ENCODE measurements at regions of chr10 and their contacts with region 1.

Region 1: DNA sequence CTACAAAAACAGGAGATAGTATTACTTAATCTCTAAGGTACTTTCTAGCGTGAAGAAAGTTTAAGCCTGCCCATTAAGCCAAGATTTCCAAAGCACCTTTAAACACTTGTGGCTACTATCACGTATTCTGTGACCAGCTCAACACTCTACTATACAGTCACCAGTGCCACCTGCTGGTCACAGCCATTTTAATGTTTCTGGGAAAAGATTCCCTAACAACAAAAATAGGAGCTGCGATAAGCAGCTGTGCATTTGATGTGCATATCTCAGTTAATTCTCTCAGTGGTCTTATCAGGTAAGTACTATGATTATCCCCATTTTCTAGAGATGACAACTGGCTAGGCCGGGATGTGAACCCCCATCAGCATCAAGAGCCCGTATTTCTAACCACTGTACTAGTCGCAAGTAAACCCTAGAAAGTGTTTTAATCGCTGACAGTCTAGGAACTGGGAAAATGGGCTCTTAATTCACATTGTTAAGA is 860 bp downstream of the SEC31B start:
- DNase-seq: peak; percentile 75
- H3K4me3 Mint-ChIP-seq: no peak overlapping the region
- H3K27ac Mint-ChIP-seq: peak overlapping the region; percentile 58
- H3K4me1 Mint-ChIP-seq: peaks cover 53% of the 10 kb centered on the region
- H3K27me3 Mint-ChIP-seq: no peaks in the 10 kb centered on the region

Region 2: DNA sequence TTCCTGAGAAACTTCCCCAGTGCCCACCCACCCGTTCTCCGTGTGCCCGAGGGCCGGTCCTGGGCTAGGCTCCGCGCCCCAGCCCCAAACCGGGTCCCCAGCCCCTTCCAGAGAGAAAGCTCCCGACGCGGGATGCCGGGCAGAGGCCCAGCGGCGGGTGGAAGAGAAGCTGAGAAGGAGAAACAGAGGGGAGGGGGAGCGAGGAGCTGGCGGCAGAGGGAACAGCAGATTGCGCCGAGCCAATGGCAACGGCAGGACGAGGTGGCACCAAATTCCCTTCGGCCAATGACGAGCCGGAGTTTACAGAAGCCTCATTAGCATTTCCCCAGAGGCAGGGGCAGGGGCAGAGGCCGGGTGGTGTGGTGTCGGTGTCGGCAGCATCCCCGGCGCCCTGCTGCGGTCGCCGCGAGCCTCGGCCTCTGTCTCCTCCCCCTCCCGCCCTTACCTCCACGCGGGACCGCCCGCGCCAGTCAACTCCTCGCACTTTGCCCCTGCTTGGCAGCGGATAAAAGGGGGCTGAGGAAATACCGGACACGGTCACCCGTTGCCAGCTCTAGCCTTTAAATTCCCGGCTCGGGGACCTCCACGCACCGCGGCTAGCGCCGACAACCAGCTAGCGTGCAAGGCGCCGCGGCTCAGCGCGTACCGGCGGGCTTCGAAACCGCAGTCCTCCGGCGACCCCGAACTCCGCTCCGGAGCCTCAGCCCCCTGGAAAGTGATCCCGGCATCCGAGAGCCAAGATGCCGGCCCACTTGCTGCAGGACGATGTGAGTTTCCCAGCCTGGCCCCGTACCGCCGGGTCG is 171.8 kb before region 1 on chr10 and contains the start of gene SCD:
- CTCF ChIA-PET with region 1: interaction called, 12 read pairs
- POLR2A ChIA-PET with region 1: no interaction called
- DNase-seq: peak; percentile 93
- H3K4me3 Mint-ChIP-seq: peak within 1 kb of the TSS; percentile 97
- H3K27ac Mint-ChIP-seq: peak within 1 kb of the TSS; percentile 83
- H3K4me1 Mint-ChIP-seq: peaks cover 71% of the 10 kb centered on the region
- H3K27me3 Mint-ChIP-seq: no peaks in the 10 kb centered on the region
- total RNA-seq, gene SCD: 117 to 129 TPM

Region 3: DNA sequence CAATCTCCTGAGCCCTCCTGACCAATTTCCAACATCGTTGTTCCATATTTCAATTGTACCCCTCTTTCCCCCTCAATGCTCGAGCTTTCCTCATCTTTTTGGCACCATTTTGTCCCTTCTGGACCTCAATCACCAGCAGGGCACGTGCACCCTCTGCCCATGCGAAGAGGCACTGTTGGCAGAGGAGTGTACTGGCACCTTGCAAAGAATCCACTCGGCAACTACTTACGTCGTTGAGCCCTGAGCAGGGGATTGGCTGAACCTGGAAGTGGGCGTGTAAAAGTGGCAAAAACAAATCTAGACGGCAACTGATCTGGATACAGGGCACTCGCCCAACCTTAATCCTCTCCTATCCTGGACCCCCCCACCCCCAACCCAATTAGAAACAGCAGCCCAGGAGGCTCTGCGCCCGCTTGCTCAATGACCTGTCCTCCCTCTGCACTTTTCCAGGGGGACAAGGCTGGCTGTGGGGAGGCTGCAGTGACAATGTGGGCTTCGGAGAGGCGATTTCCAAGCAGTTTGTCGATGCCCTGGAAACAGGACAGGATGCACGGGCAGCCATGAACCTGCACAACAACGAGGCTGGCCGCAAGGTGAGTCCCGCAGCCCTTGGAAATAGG is 37.2 kb before region 1 on chr10:
- CTCF ChIA-PET with region 1: interaction called, 82 read pairs
- POLR2A ChIA-PET with region 1: interaction called, 5 read pairs
- DNase-seq: peak; percentile 92
- H3K4me3 Mint-ChIP-seq: peak overlapping the region; percentile 74
- H3K27ac Mint-ChIP-seq: peak overlapping the region; percentile 70
- H3K4me1 Mint-ChIP-seq: peaks cover 33% of the 10 kb centered on the region
- H3K27me3 Mint-ChIP-seq: peaks cover 13% of the 10 kb centered on the region

Region 4: GRCh38 chr10:100529475-100530298 is 10.9 kb after region 1 on chr10 and contains the start of gene NDUFB8:
- CTCF ChIA-PET with region 1: interaction called, 170 read pairs
- POLR2A ChIA-PET with region 1: no interaction called
- DNase-seq: peak; percentile 92
- H3K4me3 Mint-ChIP-seq: peak within 1 kb of the TSS; percentile 100
- H3K27ac Mint-ChIP-seq: peak within 1 kb of the TSS; percentile 100
- H3K4me1 Mint-ChIP-seq: peaks cover 46% of the 10 kb centered on the region
- H3K27me3 Mint-ChIP-seq: no peaks in the 10 kb centered on the region
- total RNA-seq, gene NDUFB8: 241 to 267 TPM

Region 5: GRCh38 chr10:100551196-100551595 is 32.4 kb after region 1 on chr10:
- CTCF ChIA-PET with region 1: no interaction called
- POLR2A ChIA-PET with region 1: no interaction called
- DNase-seq: no peak
- H3K4me3 Mint-ChIP-seq: no peak overlapping the region
- H3K27ac Mint-ChIP-seq: no peak overlapping the region
- H3K4me1 Mint-ChIP-seq: peaks cover 4% of the 10 kb centered on the region
- H3K27me3 Mint-ChIP-seq: no peaks in the 10 kb centered on the region

Region 6: GRCh38 chr10:100621360-100622205 is 102.8 kb after region 1 on chr10:
- CTCF ChIA-PET with region 1: no interaction called
- POLR2A ChIA-PET with region 1: no interaction called
- DNase-seq: peak; percentile 45
- H3K4me3 Mint-ChIP-seq: peak overlapping the region; percentile 35
- H3K27ac Mint-ChIP-seq: no peak overlapping the region
- H3K4me1 Mint-ChIP-seq: no peaks in the 10 kb centered on the region
- H3K27me3 Mint-ChIP-seq: peaks cover 58% of the 10 kb centered on the region